K562 (cell line): ENCODE measurements at regions of chr4 and their contacts with region 1.

Region 1: GRCh38 chr4:122003335-122003734 is 51.5 kb upstream of the TRPC3 start:
- DNase-seq: peak; percentile 78 to 84 (median 82)
- ATAC-seq: peak; percentile 96
- H3K4me3 ChIP-seq: no peak overlapping the region
- H3K27ac ChIP-seq: no peak overlapping the region
- H3K4me1 ChIP-seq: no peaks in the 10 kb centered on the region
- H3K27me3 ChIP-seq: no peaks in the 10 kb centered on the region; a peak in 1 of 5 replicates
- CTCF ChIP-seq: peak; percentile 75 to 84 (median 81)
- EP300 ChIP-seq: no peak
- POLR2A ChIP-seq: no peak
- RAD21 ChIP-seq: peak; percentile 64 to 84

Region 2: GRCh38 chr4:121913667-121914066 is 89.7 kb before region 1 on chr4:
- CTCF ChIA-PET with region 1: no interaction called
- POLR2A ChIA-PET with region 1: no interaction called
- in situ Hi-C with region 1: no loop called
- intact Hi-C with region 1: no loop called
- DNase-seq: no peak
- ATAC-seq: no peak
- H3K4me3 ChIP-seq: no peak overlapping the region
- H3K27ac ChIP-seq: no peak overlapping the region
- H3K4me1 ChIP-seq: no peaks in the 10 kb centered on the region
- H3K27me3 ChIP-seq: peaks cover 2 to 3% of the 10 kb centered on the region in 2 experiments; a peak in 1 of 5 replicates
- CTCF ChIP-seq: no peak
- EP300 ChIP-seq: no peak
- POLR2A ChIP-seq: no peak
- RAD21 ChIP-seq: no peak

Region 3: GRCh38 chr4:122224348-122224747 is 221.0 kb after region 1 on chr4:
- CTCF ChIA-PET with region 1: no interaction called
- POLR2A ChIA-PET with region 1: no interaction called
- in situ Hi-C with region 1: no loop called
- intact Hi-C with region 1: loop called (anchors 10 kb)
- DNase-seq: peak; percentile 8 to 31 (median 10)
- ATAC-seq: peak; percentile 75; the same call in 2 of the 3 replicates
- H3K4me3 ChIP-seq: no peak overlapping the region
- H3K27ac ChIP-seq: no peak overlapping the region
- H3K4me1 ChIP-seq: no peaks in the 10 kb centered on the region
- H3K27me3 ChIP-seq: no peaks in the 10 kb centered on the region
- CTCF ChIP-seq: peak; percentile 37 to 47 (median 46); a peak in 5 of 6 replicates
- EP300 ChIP-seq: no peak
- POLR2A ChIP-seq: no peak
- RAD21 ChIP-seq: peak in 1 of 2 experiments; percentile 29; a peak in 2 of 4 replicates